Endothelial cell of umbilical vein (primary cell): ENCODE measurements at regions of chr1 and their contacts with region 1.

Region 1: DNA sequence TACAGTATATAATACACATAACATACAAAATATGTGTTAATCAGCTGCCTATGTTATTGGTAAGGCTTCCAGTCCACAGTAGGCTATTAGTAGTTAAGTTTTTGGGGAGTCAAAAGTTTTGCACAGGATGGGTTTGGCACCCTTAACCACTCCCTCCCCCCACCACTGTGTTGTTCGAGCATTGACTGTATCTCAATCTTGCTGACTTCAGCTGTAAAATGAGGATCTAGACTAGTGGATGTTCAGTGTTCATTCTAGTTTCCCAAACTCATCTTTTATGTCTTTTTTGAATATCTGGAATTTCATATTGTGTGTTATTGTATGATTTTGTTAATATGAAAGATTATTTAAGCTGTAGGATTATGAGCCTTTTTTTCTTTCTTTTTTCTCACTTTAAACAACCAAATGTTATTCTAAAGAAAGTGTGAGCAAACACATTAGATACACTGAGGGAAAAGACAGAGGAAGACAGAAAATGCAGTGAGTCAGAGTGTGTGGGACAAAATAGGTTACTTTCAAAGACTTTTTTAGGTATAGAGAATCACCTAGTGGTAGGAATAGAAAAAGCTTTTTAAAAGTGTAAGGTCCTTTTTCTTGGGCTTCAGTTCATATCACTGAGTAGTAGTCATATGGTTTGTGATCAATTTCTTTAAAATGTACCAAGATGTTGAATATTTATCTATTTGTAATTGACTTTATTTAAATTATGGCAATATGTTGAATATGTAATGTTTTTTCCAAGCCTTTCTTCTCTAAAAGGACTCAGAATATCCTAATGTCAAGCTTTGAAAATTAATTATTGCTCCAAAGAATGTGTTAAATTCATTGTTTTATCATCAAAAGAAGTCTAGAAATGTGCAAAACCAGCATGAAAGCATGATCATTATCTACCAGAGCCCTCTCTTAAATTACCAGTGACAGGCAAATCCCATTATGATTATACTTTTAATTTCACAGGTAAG is 17.9 kb upstream of the CENPF start:
- DNase-seq: peak; percentile 77
- H3K4me3 ChIP-seq: no peak overlapping the region
- H3K27ac ChIP-seq: no peak overlapping the region
- H3K4me1 ChIP-seq: peaks cover 14% of the 10 kb centered on the region
- H3K27me3 ChIP-seq: no peaks in the 10 kb centered on the region
- CTCF ChIP-seq: peak; percentile 50 to 62
- POLR2A ChIP-seq: no peak

Region 2: GRCh38 chr1:214123061-214123784 is 461.9 kb before region 1 on chr1:
- CTCF ChIA-PET with region 1: no interaction called
- POLR2A ChIA-PET with region 1: no interaction called
- dilution Hi-C with region 1: no loop called
- intact Hi-C with region 1: no loop called
- DNase-seq: peak; percentile 88
- H3K4me3 ChIP-seq: no peak overlapping the region
- H3K27ac ChIP-seq: peak overlapping the region; percentile 75
- H3K4me1 ChIP-seq: peaks cover 25% of the 10 kb centered on the region
- H3K27me3 ChIP-seq: no peaks in the 10 kb centered on the region
- CTCF ChIP-seq: peak; percentile 64 to 67
- POLR2A ChIP-seq: no peak

Region 3: GRCh38 chr1:214261206-214262123 is 323.6 kb before region 1 on chr1:
- CTCF ChIA-PET with region 1: interaction called, 11 read pairs
- POLR2A ChIA-PET with region 1: no interaction called
- dilution Hi-C with region 1: no loop called
- intact Hi-C with region 1: loop called (anchors 2 kb)
- DNase-seq: peak; percentile 86
- H3K4me3 ChIP-seq: no peak overlapping the region
- H3K27ac ChIP-seq: no peak overlapping the region
- H3K4me1 ChIP-seq: peaks cover 24% of the 10 kb centered on the region
- H3K27me3 ChIP-seq: peaks cover 0 to 4% of the 10 kb centered on the region in 2 experiments
- CTCF ChIP-seq: peak; percentile 96 to 97
- POLR2A ChIP-seq: no peak

Region 4: DNA sequence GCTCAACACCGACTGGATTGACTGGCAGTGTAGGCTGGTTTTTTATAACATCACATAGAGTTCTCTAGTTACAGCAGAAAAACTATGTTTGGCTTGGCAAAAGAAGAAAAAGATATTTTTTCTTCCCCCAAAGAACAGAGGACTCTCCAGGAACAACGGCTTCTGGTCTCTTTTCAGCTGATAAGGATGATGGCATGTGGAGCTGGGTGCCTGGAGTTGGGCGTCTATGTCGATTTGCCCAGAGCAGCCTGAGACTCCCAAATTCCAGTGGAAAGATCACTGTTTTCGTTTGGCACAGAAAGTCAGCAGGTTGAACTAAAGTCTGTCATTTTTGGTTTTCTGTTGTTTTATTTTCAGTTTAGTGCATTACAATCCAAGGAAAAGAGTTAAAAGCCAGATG is 213.0 kb before region 1 on chr1:
- CTCF ChIA-PET with region 1: interaction called, 10 read pairs
- POLR2A ChIA-PET with region 1: no interaction called
- dilution Hi-C with region 1: no loop called
- intact Hi-C with region 1: no loop called
- DNase-seq: peak; percentile 39
- H3K4me3 ChIP-seq: no peak overlapping the region
- H3K27ac ChIP-seq: no peak overlapping the region
- H3K4me1 ChIP-seq: no peaks in the 10 kb centered on the region
- H3K27me3 ChIP-seq: no peaks in the 10 kb centered on the region
- CTCF ChIP-seq: no peak
- POLR2A ChIP-seq: no peak

Region 5: GRCh38 chr1:214404154-214404553 is 180.9 kb before region 1 on chr1:
- CTCF ChIA-PET with region 1: interaction called, 13 read pairs
- POLR2A ChIA-PET with region 1: no interaction called
- dilution Hi-C with region 1: no loop called
- intact Hi-C with region 1: loop called (anchors 1 kb)
- DNase-seq: peak; percentile 90
- H3K4me3 ChIP-seq: peak overlapping the region in 1 of 3 experiments; percentile 39
- H3K27ac ChIP-seq: peak overlapping the region; percentile 99
- H3K4me1 ChIP-seq: peaks cover 35% of the 10 kb centered on the region
- H3K27me3 ChIP-seq: no peaks in the 10 kb centered on the region
- CTCF ChIP-seq: no peak
- POLR2A ChIP-seq: peak; percentile 53

Region 6: GRCh38 chr1:214551436-214552173 is 33.5 kb before region 1 on chr1 and contains the start of gene PTPN14:
- CTCF ChIA-PET with region 1: interaction called, 171 read pairs
- POLR2A ChIA-PET with region 1: interaction called, 4 read pairs
- dilution Hi-C with region 1: no loop called
- intact Hi-C with region 1: loop called (anchors 1 kb)
- DNase-seq: peak; percentile 93
- H3K4me3 ChIP-seq: peak within 1 kb of the TSS; percentile 31 to 88 (median 73)
- H3K27ac ChIP-seq: peak within 1 kb of the TSS; percentile 98
- H3K4me1 ChIP-seq: peaks cover 50% of the 10 kb centered on the region
- H3K27me3 ChIP-seq: no peaks in the 10 kb centered on the region
- CTCF ChIP-seq: peak; percentile 17 to 47
- POLR2A ChIP-seq: peak; percentile 97
- total RNA-seq, gene PTPN14: 88.9 and 93.0 TPM in 2 replicates